ENCODE measurements at regions of chr7 and their contacts with region 1.

Region 1: DNA sequence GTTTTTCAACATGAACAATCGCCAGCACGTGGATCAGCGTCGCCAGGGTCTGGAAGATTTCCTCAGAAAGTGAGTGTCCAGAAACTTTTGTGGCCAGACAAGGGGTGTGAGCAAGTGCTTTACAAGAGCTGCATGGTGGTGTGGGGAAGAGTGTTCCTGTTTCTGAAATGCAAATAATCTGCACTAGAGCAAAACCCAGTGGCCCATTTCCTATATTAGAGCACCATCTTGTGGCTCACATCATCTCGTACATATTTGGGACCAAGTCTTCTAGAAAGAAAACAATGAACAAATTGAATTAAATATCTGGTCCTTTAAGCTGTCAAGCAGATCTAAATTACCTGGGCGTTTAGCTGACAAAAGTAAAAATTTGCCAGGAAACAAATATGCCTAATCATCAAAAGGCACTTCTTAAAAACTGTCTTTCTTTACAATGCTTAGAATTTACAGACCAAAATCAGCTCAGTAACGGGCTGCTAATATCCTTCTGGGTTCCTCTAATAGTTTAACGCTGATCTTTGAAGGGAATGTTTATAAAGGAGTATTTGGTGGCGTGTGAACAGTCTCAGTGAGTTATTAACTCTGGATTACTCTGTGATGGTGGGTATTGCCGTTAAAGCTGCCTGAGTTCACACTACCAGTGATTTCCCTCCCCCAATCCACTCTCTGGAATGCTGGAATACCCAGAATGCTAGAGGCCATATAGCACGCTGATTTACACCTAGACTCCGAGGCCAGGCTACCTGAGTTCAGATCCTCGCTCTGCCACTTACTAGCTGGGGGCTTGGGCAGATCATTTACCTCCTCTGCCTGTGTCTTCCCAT is 73.6 kb downstream of the SNX10 start:
- DNase-seq: peak; percentile 77
- ATAC-seq: peak; percentile 92
- H3K4me3 ChIP-seq: no peak overlapping the region
- H3K27ac ChIP-seq: no peak overlapping the region
- H3K4me1 ChIP-seq: no peaks in the 10 kb centered on the region
- H3K27me3 ChIP-seq: peaks cover 16% of the 10 kb centered on the region
- CTCF ChIP-seq: peak; percentile 93
- POLR2A ChIP-seq: no peak
- RAD21 ChIP-seq: peak; percentile 98

Region 2: DNA sequence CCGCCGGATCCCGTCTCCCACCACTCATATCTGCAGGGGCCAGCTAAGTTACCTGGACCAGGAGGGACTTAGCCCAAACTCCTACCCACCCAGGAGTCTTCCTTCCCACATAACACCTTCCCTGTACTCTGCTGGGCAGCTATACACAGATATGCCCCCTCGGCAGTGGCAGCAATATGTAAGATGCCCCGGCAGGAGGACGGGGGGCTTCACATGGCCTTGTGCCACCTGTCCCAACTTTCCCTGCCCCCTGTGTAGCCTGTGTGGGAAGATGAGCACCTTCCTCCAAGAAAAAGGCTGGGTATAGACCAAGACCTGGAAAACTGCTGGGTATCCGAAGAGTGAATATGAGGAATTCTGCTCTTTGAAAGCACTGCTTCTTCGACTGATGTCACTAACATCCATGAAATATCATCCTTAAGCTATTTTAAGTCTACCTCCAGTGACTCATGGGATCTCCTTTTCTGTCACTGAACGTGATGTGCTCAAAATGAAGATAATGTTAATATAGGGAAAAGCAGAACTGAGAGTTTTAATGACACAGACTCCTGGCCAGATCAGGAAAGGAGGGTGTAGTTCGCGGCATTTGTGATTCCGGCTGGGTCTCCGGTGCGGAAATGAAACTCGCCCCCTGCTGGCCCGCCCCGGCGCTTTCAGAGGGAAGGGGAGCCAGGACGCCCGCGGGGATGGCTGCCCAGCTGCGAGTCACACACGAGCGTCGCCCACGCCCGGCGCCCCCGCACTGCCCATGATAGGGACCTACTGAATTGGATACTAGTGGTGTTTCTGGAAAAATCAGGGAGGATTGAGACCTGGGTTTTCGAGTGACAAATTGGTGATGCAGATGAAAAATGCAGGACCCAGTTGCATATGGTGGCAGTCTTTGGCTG is 470.1 kb before region 1 on chr7:
- CTCF ChIA-PET with region 1: interaction called, 26 read pairs
- POLR2A ChIA-PET with region 1: no interaction called
- dilution Hi-C with region 1: no loop called
- in situ Hi-C with region 1: loop called (anchors 5 kb)
- intact Hi-C with region 1: loop called (anchors 1 kb)
- DNase-seq: peak; percentile 2
- ATAC-seq: peak; percentile 69
- H3K4me3 ChIP-seq: peak overlapping the region; percentile 33; the same call in 1 of the 2 replicates
- H3K27ac ChIP-seq: no peak overlapping the region
- H3K4me1 ChIP-seq: no peaks in the 10 kb centered on the region
- H3K27me3 ChIP-seq: peaks cover 25% of the 10 kb centered on the region
- CTCF ChIP-seq: peak; percentile 50
- POLR2A ChIP-seq: no peak
- RAD21 ChIP-seq: no peak

Region 3: GRCh38 chr7:26090927-26091519 is 274.3 kb before region 1 on chr7:
- CTCF ChIA-PET with region 1: interaction called, 21 read pairs
- POLR2A ChIA-PET with region 1: no interaction called
- dilution Hi-C with region 1: no loop called
- in situ Hi-C with region 1: loop called (anchors 10 kb)
- intact Hi-C with region 1: loop called (anchors 1 kb)
- DNase-seq: peak; percentile 74
- ATAC-seq: peak; percentile 89
- H3K4me3 ChIP-seq: no peak overlapping the region
- H3K27ac ChIP-seq: no peak overlapping the region
- H3K4me1 ChIP-seq: no peaks in the 10 kb centered on the region
- H3K27me3 ChIP-seq: peaks cover 11% of the 10 kb centered on the region
- CTCF ChIP-seq: peak; percentile 76
- POLR2A ChIP-seq: no peak
- RAD21 ChIP-seq: peak; percentile 80

Region 4: DNA sequence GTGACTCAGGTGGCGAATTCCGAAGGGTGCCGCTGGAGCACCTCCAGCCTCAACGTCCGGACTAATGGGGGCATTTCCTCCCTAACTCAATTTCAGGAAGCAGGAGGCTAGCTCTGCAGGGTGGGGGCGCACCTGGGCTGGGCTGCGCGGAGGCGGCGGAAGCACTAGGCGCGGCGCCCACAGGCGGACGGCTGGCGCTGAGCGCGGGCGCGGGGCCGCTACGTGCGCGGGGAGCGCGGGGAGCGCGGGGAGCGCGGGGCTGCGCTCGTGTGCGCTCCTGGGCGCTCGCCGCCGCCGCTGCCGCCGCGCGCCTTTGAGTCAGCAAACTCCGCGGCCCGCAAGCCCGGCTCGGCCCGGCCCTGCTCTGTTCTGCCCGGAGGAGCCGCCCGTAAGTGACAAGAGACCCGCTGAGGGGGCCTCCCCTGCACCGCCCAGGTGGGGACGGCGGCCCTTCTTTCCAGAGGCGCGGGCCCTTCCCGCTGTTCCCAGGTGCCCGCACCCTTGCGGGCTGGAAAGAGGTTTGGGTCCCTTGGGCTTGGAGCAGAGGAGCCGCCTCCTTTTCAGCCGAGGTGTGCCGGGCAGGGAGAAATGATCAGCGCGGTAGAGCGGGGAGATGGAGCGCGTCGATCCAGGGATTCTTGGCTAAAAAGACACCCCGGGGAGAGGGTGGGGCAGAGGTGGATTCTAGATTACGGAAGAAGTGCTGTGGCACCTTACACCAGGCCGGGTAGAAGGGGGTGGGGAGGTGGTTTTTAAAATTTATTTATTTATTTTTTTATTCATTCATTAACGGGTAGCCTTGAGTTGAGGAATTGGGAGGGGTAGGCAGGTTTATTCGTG is 73.4 kb before region 1 on chr7 and contains the start of gene SNX10:
- CTCF ChIA-PET with region 1: no interaction called
- POLR2A ChIA-PET with region 1: interaction called, 11 read pairs
- dilution Hi-C with region 1: no loop called
- in situ Hi-C with region 1: no loop called
- intact Hi-C with region 1: no loop called
- DNase-seq: no peak
- ATAC-seq: peak; percentile 66
- H3K4me3 ChIP-seq: peak within 1 kb of the TSS; percentile 24; the same call in 1 of the 2 replicates
- H3K27ac ChIP-seq: no peak within 1 kb of the TSS
- H3K4me1 ChIP-seq: no peaks in the 10 kb centered on the region
- H3K27me3 ChIP-seq: peaks cover 13% of the 10 kb centered on the region
- CTCF ChIP-seq: no peak
- POLR2A ChIP-seq: no peak
- RAD21 ChIP-seq: no peak
- total RNA-seq, gene SNX10: not detected in 2 replicates

Region 5: GRCh38 chr7:26417911-26418413 is 52.7 kb after region 1 on chr7:
- CTCF ChIA-PET with region 1: no interaction called
- POLR2A ChIA-PET with region 1: no interaction called
- dilution Hi-C with region 1: no loop called
- in situ Hi-C with region 1: no loop called
- intact Hi-C with region 1: no loop called
- DNase-seq: no peak
- ATAC-seq: no peak
- H3K4me3 ChIP-seq: no peak overlapping the region
- H3K27ac ChIP-seq: no peak overlapping the region
- H3K4me1 ChIP-seq: no peaks in the 10 kb centered on the region
- H3K27me3 ChIP-seq: no peaks in the 10 kb centered on the region
- CTCF ChIP-seq: no peak
- POLR2A ChIP-seq: no peak
- RAD21 ChIP-seq: no peak

Region 6: DNA sequence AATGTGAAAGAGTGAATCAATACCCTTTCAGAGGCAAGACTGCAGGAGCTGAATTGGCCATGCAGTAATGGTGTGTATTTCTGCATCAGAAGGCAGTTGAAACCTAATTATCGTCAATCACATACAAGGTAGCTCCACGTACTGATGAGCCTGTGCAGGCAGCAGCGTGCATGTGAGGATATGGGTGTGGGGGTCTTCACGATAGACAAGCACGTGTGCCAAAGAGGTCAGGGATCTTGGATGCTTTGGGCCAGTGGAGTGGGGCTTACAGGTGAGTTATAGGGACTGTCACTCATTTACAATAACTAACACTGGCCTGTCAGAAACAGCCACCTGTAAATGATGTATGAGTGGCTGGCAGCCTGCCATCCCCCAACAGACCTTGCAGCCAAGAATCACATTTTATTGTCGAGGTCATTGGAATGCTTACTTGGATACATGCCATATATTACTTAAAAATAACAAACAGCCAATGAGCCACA is 288.2 kb after region 1 on chr7:
- CTCF ChIA-PET with region 1: interaction called, 4 read pairs
- POLR2A ChIA-PET with region 1: no interaction called
- dilution Hi-C with region 1: no loop called
- in situ Hi-C with region 1: loop called (anchors 10 kb)
- intact Hi-C with region 1: no loop called
- DNase-seq: no peak
- ATAC-seq: no peak
- H3K4me3 ChIP-seq: no peak overlapping the region
- H3K27ac ChIP-seq: no peak overlapping the region
- H3K4me1 ChIP-seq: no peaks in the 10 kb centered on the region
- H3K27me3 ChIP-seq: peaks cover 2% of the 10 kb centered on the region
- CTCF ChIP-seq: no peak
- POLR2A ChIP-seq: no peak
- RAD21 ChIP-seq: no peak

Region 7: DNA sequence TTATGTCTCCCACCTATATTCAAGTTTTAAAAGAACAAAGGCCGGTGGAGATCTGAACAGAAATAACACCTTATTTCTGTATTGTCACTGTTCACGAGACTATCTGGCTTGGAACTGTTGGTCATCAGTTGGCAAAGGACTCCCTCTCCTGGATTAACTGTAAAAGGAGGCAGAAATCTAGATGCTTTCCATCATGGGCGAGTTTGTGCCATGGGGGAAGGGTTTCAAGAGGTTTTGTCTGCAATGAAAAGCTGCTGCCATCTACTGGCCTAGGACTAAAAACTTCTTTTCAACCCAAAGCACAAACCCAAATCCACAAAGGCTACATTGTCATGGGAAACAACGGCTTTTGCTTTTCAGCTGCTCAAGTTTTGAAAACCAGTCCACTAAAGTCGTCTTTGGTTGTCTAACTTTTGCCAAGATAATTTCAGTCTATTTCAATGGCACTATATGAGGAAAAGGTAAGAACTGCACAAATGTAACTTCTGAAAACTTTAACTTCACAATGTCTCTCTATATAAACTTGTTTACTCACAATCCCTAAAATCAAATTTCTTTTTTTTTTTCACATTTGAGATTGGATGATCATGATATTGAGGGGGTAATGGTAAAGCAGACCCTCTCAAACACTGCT is 302.3 kb after region 1 on chr7:
- CTCF ChIA-PET with region 1: interaction called, 33 read pairs
- POLR2A ChIA-PET with region 1: no interaction called
- dilution Hi-C with region 1: no loop called
- in situ Hi-C with region 1: no loop called
- intact Hi-C with region 1: loop called (anchors 1 kb)
- DNase-seq: peak; percentile 90
- ATAC-seq: peak; percentile 96
- H3K4me3 ChIP-seq: no peak overlapping the region
- H3K27ac ChIP-seq: no peak overlapping the region
- H3K4me1 ChIP-seq: no peaks in the 10 kb centered on the region
- H3K27me3 ChIP-seq: no peaks in the 10 kb centered on the region
- CTCF ChIP-seq: peak; percentile 95
- POLR2A ChIP-seq: no peak
- RAD21 ChIP-seq: peak; percentile 80

Region 8: GRCh38 chr7:27160546-27161213 is 795.4 kb after region 1 on chr7:
- CTCF ChIA-PET with region 1: interaction called, 29 read pairs
- POLR2A ChIA-PET with region 1: no interaction called
- dilution Hi-C with region 1: no loop called
- in situ Hi-C with region 1: loop called (anchors 5 kb)
- intact Hi-C with region 1: loop called (anchors 1 kb)
- DNase-seq: peak; percentile 77
- ATAC-seq: peak; percentile 89
- H3K4me3 ChIP-seq: peak overlapping the region; percentile 55
- H3K27ac ChIP-seq: no peak overlapping the region
- H3K4me1 ChIP-seq: peaks cover 1% of the 10 kb centered on the region; the same call in 1 of the 2 replicates
- H3K27me3 ChIP-seq: peaks cover 28% of the 10 kb centered on the region
- CTCF ChIP-seq: peak; percentile 95
- POLR2A ChIP-seq: no peak
- RAD21 ChIP-seq: peak; percentile 96

Measured in IMR-90 (cell line).